Activated B cell treated with CpG ODN at 0.5 μM for 24 hours (primary cell): ENCODE measurements at regions of chr7 and their contacts with region 1.

Region 1: GRCh38 chr7:17123020-17123419 is 175.4 kb upstream of the AHR start:
- DNase-seq: no peak
- ATAC-seq: no peak
- H3K4me3 Mint-ChIP-seq: peak overlapping the region; percentile 50
- H3K27ac Mint-ChIP-seq: no peak overlapping the region
- H3K4me1 Mint-ChIP-seq: peaks cover 17% of the 10 kb centered on the region
- H3K27me3 Mint-ChIP-seq: no peaks in the 10 kb centered on the region
- CTCF ChIP-seq: no peak

Region 2: DNA sequence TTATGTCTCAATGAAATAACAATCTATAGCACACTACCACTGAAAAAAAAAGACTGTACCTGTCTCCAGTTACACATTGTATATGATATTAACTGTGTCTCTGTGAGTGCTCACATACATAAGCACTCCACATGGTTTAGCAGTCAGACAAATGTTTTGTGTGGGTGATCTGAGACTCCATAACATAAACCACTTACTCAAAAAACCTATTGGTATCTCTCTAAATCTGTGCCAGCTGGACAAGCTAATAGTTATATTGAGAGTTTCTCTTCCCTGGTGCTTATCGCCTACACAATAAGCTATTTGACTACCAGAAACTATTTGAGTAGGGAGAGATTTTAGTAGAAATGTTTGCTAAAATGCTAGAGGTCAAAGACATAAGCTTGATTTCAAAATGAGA is 51.2 kb before region 1 on chr7:
- CTCF ChIA-PET with region 1: no interaction called
- POLR2A ChIA-PET with region 1: no interaction called
- intact Hi-C with region 1: loop called (anchors 5 kb)
- DNase-seq: no peak
- ATAC-seq: no peak
- H3K4me3 Mint-ChIP-seq: no peak overlapping the region
- H3K27ac Mint-ChIP-seq: no peak overlapping the region
- H3K4me1 Mint-ChIP-seq: peaks cover 16% of the 10 kb centered on the region
- H3K27me3 Mint-ChIP-seq: no peaks in the 10 kb centered on the region
- CTCF ChIP-seq: no peak

Region 3: GRCh38 chr7:17139081-17139480 is 16.1 kb after region 1 on chr7:
- CTCF ChIA-PET with region 1: no interaction called
- POLR2A ChIA-PET with region 1: no interaction called
- intact Hi-C with region 1: loop called (anchors 2 kb)
- DNase-seq: no peak
- ATAC-seq: no peak
- H3K4me3 Mint-ChIP-seq: no peak overlapping the region
- H3K27ac Mint-ChIP-seq: no peak overlapping the region
- H3K4me1 Mint-ChIP-seq: peaks cover 15% of the 10 kb centered on the region
- H3K27me3 Mint-ChIP-seq: no peaks in the 10 kb centered on the region
- CTCF ChIP-seq: no peak

Region 4: DNA sequence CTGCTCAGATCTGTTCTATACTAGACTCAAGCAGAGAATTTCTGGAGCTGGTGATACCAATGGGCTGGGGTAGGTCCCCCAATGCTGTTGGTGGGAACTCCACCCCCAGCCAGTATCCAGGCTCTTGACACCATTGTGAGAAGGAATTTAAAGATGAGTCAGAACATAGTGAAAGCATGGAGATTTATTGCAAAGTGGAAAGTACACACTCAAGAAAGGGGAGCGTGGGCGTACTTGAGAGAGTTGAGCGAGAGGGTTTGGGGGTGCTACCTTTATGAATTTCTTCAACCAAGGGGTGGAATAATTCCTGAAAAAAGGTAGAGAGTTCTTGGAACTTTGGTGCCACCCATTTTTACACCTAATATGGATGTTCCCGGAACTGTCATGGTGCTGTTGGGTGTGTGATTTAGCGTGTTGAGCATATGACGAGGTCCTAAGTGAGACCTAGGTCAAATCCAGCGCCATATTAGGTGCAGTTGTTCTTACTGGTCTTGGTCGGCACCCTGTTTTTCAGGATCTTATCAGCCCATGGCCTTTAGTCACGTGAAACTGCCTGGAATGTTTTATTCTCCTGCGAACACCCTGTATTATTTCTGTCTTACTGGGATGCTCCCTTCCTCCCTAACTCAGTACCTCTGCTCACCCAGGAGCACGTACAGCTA is 53.5 kb after region 1 on chr7:
- CTCF ChIA-PET with region 1: no interaction called
- POLR2A ChIA-PET with region 1: no interaction called
- intact Hi-C with region 1: no loop called
- DNase-seq: no peak
- ATAC-seq: no peak
- H3K4me3 Mint-ChIP-seq: no peak overlapping the region
- H3K27ac Mint-ChIP-seq: no peak overlapping the region
- H3K4me1 Mint-ChIP-seq: no peaks in the 10 kb centered on the region
- H3K27me3 Mint-ChIP-seq: no peaks in the 10 kb centered on the region
- CTCF ChIP-seq: no peak